Dorsolateral prefrontal cortex (tissue), 120 donors: ENCODE measurements at regions of chr10 and their contacts with region 1.

Region 1: GRCh38 chr10:34885898-34886297 is 70.8 kb upstream of the PARD3 start:
- DNase-seq: no peak
- H3K4me3 ChIP-seq: no peak overlapping the region
- H3K27ac ChIP-seq: no peak overlapping the region
- H3K27me3 ChIP-seq: peaks cover 0 to 4% (median 0%) of the 10 kb centered on the region in 45 donors
- CTCF ChIP-seq: no peak

Region 2: DNA sequence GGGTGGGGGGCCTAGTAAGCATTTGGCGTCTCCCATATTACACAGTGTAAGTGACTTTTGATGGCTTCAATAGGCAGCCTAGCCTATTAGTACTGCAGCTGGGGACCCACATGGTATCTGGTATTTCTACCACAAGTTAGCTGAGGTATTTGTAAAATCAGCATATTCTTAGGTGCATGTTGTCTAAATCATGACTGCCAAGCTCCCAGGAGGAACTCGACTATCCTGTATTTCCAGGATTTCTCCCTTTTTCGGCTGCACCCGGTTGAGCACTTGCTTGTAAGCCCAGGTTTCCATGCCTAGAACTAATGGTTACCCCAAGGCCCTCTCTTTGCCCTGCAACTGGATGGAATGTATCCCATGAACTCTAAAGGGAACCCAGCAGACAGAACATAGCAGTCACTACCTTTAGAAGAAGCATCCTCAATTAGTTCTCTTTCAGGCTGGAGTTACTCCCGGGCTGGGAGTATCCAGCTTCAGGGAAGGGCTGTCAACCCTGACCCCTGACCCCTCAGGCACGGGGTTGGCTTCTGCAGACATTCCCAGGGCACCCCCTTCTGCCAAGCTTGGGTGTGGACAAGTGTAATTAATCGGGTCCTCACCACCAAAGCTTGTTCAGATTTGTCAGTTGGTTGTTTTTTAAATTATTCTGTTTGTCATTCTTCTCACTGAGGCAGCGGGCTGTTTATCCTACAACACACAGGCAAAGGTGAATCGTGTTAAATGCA is 19.5 kb after region 1 on chr10:
- intact Hi-C with region 1: loop called in 1 of 2 experiments (anchors 2 kb)
- DNase-seq: no peak
- H3K4me3 ChIP-seq: no peak overlapping the region
- H3K27ac ChIP-seq: no peak overlapping the region
- H3K27me3 ChIP-seq: peaks cover 0 to 3% (median 0%) of the 10 kb centered on the region in 45 donors
- CTCF ChIP-seq: no peak

Region 3: DNA sequence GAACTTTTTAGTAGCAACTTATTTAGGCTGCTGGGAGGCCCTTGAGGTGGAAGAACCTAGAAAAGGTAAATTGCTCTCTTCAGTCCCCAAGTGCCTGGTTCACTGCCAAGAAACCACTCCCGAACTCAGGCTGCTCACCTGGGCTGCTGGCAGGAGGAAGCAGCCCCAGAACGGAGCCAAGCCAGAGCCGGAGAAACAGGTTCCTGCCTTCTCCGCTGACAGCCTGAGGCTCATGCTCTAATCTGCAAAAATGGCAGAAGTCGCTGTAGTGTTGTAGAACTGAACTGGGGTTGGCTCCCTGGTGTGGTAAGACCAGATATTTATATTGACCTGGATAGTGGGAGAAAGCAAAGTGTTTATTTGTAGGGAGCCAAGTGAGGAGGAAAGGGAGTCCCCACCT is 68.3 kb after region 1 on chr10:
- intact Hi-C with region 1: no loop called
- DNase-seq: no peak
- H3K4me3 ChIP-seq: no peak overlapping the region
- H3K27ac ChIP-seq: no peak overlapping the region
- H3K27me3 ChIP-seq: peaks cover 0 to 5% (median 0%) of the 10 kb centered on the region in 45 donors
- CTCF ChIP-seq: no peak